Activated CD8-positive, alpha-beta T cell treated with anti-CD3 and anti-CD28 coated beads, Interleukin-2, amount 10 ng/mL, durations not matched to agents 7 days and 5 days (primary cell): ENCODE measurements at regions of chr6 and their contacts with region 1.

Region 1: DNA sequence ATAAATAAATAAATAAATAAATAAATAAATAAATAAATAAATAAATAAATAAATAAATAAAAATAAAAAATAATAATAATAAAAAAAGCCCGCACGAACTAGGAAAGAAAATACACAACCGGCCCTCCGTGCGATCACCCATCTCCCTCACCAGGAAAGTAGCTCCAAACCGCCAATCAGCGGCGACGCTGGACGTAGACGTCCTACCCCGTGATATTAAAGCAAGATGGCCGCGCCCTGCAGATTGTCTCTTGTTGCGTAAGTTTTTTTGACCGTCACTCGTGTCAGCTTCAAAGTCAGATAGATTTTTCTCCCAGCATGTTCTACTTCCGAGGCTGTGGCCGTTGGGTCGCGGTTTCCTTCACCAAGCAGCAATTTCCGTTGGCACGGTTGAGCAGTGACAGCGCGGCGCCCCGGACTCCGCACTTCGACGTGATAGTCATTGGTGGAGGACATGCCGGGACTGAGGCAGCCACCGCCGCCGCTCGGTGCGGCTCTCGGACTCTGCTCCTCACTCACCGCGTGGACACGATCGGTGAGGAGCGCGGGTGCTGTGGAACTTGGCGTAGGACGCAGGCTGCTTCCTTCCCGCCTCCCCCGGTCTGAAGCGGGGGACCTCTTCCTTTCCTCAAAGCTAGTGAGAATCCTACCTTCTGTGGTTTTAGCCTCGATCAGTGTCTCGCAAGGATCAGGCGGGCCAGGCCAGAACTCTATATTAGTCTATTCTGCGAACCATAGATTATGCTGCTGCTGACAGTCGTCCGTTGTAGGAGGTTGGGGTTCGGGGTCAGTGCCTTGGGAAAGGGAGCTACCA is at the start of gene MTO1:
- DNase-seq: peak; percentile 92
- ATAC-seq: peak; percentile 91
- H3K4me3 Mint-ChIP-seq: peak within 1 kb of the TSS; percentile 94
- H3K27ac Mint-ChIP-seq: peak within 1 kb of the TSS; percentile 98
- H3K4me1 Mint-ChIP-seq: peaks cover 51% of the 10 kb centered on the region
- H3K27me3 Mint-ChIP-seq: no peaks in the 10 kb centered on the region
- total RNA-seq, gene MTO1: 51.7 to 54.3 TPM

Region 2: DNA sequence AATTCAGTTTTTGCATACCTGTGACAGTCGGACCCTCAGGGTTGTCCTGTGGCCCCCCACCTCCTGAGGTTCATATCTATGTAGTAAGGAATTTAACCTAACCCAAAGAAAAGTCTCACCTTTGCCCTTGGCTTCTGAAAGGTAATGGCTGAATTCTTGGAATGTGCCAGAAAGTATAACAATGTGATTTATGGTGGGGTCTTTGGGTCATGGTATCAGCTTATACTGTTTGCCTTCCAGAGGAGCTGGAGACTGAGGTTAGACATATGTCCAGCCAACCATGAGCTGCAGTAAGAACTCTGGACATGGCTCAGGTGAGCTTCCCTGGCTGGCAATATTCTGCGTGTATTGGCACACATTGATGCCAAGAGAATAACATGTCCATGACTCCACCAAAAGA is 40.2 kb before region 1 on chr6:
- CTCF ChIA-PET with region 1: interaction called, 3 read pairs
- POLR2A ChIA-PET with region 1: interaction called, 12 read pairs
- DNase-seq: no peak
- ATAC-seq: no peak
- H3K4me3 Mint-ChIP-seq: peak overlapping the region; percentile 66
- H3K27ac Mint-ChIP-seq: peak overlapping the region; percentile 94
- H3K4me1 Mint-ChIP-seq: peaks cover 43% of the 10 kb centered on the region
- H3K27me3 Mint-ChIP-seq: no peaks in the 10 kb centered on the region

Region 3: DNA sequence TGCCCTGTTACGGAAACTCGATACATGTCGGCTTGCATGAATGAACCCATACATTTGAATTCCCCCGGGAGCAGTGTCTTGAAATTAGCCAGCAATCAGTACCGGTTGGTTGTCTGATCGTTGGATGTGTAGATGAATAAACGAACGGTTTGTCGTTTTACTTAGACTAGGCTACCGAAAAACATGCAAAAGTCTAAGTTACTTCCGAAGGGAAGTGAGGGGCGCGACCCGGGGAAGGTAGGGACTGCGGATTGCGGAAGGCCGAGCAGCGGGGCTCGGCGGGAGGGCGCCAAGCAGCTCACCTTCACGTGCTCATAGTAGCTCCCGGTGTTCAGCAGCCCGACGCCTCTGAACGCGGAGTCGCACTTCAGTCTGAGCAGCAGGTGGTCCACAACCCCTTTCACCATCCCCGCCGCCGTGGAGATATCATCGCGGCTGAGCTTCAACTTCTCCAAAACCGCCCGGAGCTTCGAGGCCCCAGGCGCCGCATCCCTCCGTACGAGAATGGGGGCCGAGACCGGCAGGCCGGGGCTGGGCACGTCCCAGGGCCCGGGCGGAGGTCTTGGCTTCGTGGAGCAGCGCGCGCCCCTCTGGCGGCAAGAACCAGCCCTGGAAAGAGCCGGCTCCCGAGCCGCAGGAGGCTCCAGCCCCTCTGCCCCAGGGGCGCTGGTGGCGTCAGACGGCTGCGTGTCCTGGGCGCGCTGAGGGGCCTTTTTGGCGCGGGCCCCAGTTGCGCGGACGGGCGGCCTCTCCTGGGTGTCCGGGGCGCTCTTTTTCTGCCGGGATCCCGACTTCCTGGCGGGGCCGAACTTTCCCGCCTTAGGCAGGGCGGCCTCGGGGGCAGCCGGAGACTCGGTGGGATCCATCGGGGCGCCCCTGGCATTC is 10.3 kb before region 1 on chr6:
- CTCF ChIA-PET with region 1: interaction called, 26 read pairs
- POLR2A ChIA-PET with region 1: interaction called, 150 read pairs
- DNase-seq: peak; percentile 62
- ATAC-seq: peak; percentile 63
- H3K4me3 Mint-ChIP-seq: peak overlapping the region; percentile 89
- H3K27ac Mint-ChIP-seq: peak overlapping the region; percentile 90
- H3K4me1 Mint-ChIP-seq: peaks cover 45% of the 10 kb centered on the region
- H3K27me3 Mint-ChIP-seq: no peaks in the 10 kb centered on the region

Region 4: DNA sequence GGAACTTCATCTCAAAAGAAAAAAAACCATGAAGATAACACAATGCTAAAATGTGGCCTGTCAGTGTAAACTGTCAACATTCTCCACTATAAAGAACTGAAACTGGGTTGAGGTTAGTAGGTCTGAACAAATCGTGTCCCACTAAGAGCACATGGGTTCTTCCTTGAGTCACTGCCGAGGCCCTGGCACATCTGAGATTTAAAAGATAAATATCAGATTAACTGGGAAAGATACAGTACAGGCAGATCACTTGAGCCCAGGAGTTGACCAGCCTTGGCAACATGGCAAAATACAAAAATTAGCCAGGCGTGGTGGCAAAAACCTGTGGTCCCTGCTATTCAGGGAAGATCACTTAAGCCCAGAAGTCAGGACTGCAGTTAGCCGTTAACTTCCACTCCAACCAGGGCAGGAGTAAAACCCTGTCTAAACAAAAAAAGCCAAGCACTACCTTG is 53.5 kb after region 1 on chr6:
- CTCF ChIA-PET with region 1: interaction called, 9 read pairs
- POLR2A ChIA-PET with region 1: interaction called, 69 read pairs
- DNase-seq: no peak
- ATAC-seq: peak; percentile 5
- H3K4me3 Mint-ChIP-seq: peak overlapping the region; percentile 70
- H3K27ac Mint-ChIP-seq: peak overlapping the region; percentile 76
- H3K4me1 Mint-ChIP-seq: peaks cover 38% of the 10 kb centered on the region
- H3K27me3 Mint-ChIP-seq: no peaks in the 10 kb centered on the region

Region 5: GRCh38 chr6:73585566-73586415 is 124.0 kb after region 1 on chr6:
- CTCF ChIA-PET with region 1: interaction called, 7 read pairs
- POLR2A ChIA-PET with region 1: interaction called, 11 read pairs
- DNase-seq: peak; percentile 70
- ATAC-seq: peak; percentile 81
- H3K4me3 Mint-ChIP-seq: peak overlapping the region; percentile 80
- H3K27ac Mint-ChIP-seq: peak overlapping the region; percentile 99
- H3K4me1 Mint-ChIP-seq: peaks cover 35% of the 10 kb centered on the region
- H3K27me3 Mint-ChIP-seq: no peaks in the 10 kb centered on the region

Region 6: DNA sequence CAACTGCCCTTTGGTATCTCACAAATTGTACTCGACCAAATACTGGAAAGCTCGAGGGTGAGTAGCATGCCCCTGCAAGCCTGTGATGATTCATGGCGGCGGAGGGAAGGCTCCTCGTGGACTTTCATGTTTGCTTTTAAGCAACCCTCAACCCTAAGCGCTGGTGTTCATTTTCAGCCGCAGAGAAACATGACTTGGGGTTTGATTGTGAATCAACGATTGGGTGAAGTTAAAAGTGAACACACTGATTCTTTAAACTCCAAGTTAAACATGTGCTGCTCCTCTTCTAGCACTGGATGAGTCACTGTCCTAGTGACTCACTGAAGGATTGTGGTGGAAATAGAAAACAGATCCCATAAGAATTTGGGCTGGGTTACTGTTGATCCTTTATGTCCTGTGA is 242.5 kb after region 1 on chr6:
- CTCF ChIA-PET with region 1: no interaction called
- POLR2A ChIA-PET with region 1: no interaction called
- DNase-seq: no peak
- ATAC-seq: no peak
- H3K4me3 Mint-ChIP-seq: no peak overlapping the region
- H3K27ac Mint-ChIP-seq: no peak overlapping the region
- H3K4me1 Mint-ChIP-seq: no peaks in the 10 kb centered on the region
- H3K27me3 Mint-ChIP-seq: no peaks in the 10 kb centered on the region